Sigmoid colon (tissue), 7 donors: ENCODE measurements at regions of chr1 and their contacts with region 1.

Region 1: DNA sequence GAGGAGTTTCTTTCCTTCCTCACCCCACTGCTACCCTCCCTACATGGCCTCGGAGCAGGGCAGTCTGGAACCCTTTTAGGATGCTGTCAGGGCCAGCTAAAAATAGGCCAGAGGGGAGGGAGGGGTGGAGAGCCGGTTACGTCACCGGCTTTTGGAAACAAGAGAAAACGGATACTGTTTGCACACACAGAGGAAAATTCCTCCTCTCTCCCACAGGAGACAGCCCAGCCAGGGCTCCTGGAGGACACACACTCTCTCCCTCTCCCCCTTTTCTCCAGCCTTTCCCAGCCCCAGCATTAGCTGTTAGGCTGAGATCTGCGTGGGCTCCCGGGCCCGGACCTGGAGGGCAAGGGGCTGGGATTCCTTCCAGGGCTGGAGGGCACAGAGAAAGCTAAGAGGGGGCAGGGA is 20.0 kb upstream of the ALDH4A1 start:
- DNase-seq: peak; percentile 97
- H3K4me3 ChIP-seq: peak overlapping the region in 2 of 4 donors; percentile 12 to 20
- H3K27ac ChIP-seq: peak overlapping the region; percentile 92 to 98 (median 93)
- H3K4me1 ChIP-seq: peaks cover 0 to 60% (median 53%) of the 10 kb centered on the region in 4 donors
- H3K27me3 ChIP-seq: no peaks in the 10 kb centered on the region
- CTCF ChIP-seq: peak in 3 of 4 experiments; percentile 15 to 52 (median 25)
- EP300 ChIP-seq: peak in 2 of 4 donors; percentile 84 to 85
- POLR2A ChIP-seq: peak; percentile 41 to 43

Region 2: GRCh38 chr1:18941221-18942141 is 19.2 kb after region 1 on chr1:
- intact Hi-C with region 1: loop called (anchors 2 kb)
- DNase-seq: no peak
- H3K4me3 ChIP-seq: no peak overlapping the region
- H3K27ac ChIP-seq: peak overlapping the region; percentile 35 to 94 (median 50)
- H3K4me1 ChIP-seq: peaks cover 0 to 99% (median 90%) of the 10 kb centered on the region in 4 donors
- H3K27me3 ChIP-seq: no peaks in the 10 kb centered on the region
- CTCF ChIP-seq: no peak
- EP300 ChIP-seq: no peak
- POLR2A ChIP-seq: no peak

Region 3: DNA sequence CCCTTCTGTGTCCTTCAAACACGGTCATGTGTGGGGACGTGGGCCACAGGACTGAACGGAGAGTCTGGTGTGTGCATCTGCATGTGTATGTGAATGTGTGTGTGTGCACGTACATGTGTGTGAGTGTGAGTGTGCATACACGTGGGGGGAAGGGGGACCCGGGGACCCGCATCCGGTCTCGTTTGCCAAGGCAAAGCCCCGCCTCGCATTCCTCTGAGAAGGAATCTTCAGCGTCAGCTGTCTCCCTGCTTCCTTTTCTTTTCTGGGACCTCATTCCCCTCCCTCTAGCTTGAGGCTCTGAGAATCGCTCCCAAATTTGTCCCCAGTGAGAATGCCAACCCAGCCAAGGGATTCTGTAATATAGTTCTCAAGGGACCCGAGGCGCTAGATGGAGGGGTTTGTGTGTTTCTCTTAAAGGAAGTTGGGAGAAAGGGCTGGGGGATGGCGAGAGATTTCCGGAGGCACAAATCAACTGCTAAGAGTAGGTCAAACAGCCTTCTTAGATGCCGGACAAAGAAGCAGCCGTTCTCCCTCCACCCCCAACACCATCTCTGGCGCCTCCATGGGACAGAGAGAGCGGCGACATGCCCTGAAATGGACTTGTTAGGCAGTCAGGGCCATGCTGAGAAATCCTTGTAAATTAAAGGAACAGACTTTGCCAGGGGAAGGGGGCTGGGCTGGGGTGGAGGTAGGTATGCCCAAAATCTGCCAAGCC is 27.5 kb after region 1 on chr1:
- intact Hi-C with region 1: loop called (anchors 2 kb)
- DNase-seq: peak; percentile 84
- H3K4me3 ChIP-seq: peak overlapping the region; percentile 11 to 38 (median 33)
- H3K27ac ChIP-seq: peak overlapping the region; percentile 92 to 95 (median 94)
- H3K4me1 ChIP-seq: peaks cover 0 to 99% (median 91%) of the 10 kb centered on the region in 4 donors
- H3K27me3 ChIP-seq: no peaks in the 10 kb centered on the region
- CTCF ChIP-seq: peak in 1 of 4 experiments; percentile 52
- EP300 ChIP-seq: no peak
- POLR2A ChIP-seq: no peak

Region 4: DNA sequence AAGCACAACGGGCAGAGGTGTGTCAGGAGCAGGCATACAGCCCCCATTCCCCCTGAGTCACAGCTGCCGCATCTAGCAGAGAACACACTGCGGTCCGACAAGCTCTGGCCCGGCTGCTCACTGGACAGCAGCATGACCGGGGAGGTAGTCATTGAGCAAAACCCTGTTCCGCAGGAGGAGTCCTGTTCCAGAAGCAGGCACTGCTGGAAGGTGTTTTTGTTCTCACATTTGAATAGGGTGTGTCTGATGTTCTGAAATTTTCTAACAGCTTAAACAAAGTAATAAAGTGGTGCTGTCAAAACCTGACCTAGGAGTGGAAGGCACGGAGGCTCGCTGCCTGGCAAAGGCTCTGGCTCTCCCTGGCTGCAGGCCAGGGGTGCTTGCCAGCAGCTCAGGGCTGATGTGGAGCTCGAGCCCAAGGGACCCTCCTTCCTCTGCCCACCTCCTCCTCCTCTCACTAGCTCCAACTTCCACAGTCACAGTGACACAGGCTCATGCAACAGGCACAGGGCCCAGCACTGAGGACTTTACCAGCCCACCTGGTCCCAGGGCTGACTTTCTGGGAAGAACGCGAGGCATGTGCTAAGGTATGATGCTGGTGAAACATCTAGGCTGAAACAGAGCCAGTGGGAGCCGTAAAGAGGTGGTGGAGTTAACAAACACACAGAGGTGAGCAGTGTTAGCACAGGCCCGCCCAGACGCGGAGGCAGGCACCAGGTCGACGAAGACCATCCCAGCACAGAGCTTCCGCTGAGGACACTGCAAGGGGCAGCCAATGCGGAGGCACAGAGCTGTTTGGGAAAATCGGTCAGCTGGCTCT is 152.8 kb after region 1 on chr1:
- intact Hi-C with region 1: loop called (anchors 5 kb)
- DNase-seq: no peak
- H3K4me3 ChIP-seq: no peak overlapping the region
- H3K27ac ChIP-seq: peak overlapping the region; percentile 48 to 67 (median 62)
- H3K4me1 ChIP-seq: peaks cover 0 to 36% (median 31%) of the 10 kb centered on the region in 4 donors
- H3K27me3 ChIP-seq: no peaks in the 10 kb centered on the region
- CTCF ChIP-seq: no peak
- EP300 ChIP-seq: no peak
- POLR2A ChIP-seq: no peak